ENCODE measurements at regions of chr11 and their contacts with region 1.

Region 1: DNA sequence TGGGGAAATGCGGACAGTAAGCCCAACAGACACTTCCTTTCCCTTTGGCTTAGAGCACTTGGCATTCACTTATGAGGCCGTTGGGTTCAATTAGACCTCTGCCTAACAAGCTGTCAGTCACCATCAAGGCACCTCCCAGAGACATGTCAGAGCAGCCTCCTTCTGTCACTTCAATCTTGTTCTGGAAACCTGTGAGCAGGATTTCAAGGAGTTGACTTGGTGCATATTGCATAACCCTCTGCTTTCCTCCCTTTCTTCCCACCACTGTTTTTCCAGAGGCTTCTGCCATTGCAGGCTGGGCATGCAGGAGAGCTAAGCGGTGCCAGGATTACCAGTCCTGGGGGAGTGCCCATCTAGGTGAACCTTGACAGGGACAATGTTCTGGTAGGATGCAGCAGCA is 484.2 kb upstream of the LRRC4C start:
- DNase-seq: no peak
- ATAC-seq: no peak
- H3K4me3 ChIP-seq: no peak overlapping the region
- H3K4me3 Mint-ChIP-seq: no peak overlapping the region
- H3K27ac ChIP-seq: no peak overlapping the region
- H3K27ac Mint-ChIP-seq: no peak overlapping the region
- H3K4me1 ChIP-seq: no peaks in the 10 kb centered on the region
- H3K4me1 Mint-ChIP-seq: no peaks in the 10 kb centered on the region
- H3K27me3 ChIP-seq: no peaks in the 10 kb centered on the region
- H3K27me3 Mint-ChIP-seq: no peaks in the 10 kb centered on the region
- CTCF ChIP-seq: no peak

Region 2: DNA sequence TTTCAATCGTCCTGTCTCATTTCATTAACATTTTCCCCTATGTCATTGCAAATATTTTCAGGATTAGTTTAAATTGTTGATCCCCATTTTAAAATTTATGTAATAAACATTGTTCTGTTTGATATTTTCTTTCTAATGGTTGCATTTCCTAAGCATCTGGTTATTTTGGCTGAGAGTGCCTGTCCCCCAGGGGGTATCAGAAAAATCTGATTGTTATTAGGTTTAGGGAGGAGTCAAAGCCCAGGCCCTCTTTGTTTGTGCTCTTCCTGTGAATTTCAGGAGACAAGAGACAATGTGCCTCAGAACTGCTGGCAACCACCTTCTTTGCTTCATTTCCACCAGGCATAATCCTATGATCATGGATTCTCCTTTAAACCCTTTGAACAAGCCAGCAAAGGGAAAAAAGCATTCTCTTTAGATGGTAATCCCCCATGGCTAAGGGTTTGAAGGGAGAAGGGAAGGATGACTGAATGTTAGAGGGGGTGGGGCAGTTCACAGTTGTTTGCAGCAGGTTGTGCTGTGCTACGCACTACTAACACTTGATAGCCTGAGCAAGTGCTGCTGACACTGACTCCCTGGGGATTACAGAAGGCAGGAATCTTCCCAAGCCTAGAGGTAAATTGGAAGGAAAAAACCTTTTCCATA is 21.8 kb before region 1 on chr11:
- CTCF ChIA-PET with region 1: no interaction called
- POLR2A ChIA-PET with region 1: no interaction called
- intact Hi-C with region 1: loop called in 1 of 2 experiments (anchors 2 kb)
- DNase-seq: no peak
- ATAC-seq: no peak
- H3K4me3 ChIP-seq: no peak overlapping the region
- H3K4me3 Mint-ChIP-seq: no peak overlapping the region
- H3K27ac ChIP-seq: no peak overlapping the region
- H3K27ac Mint-ChIP-seq: no peak overlapping the region
- H3K4me1 ChIP-seq: no peaks in the 10 kb centered on the region
- H3K4me1 Mint-ChIP-seq: no peaks in the 10 kb centered on the region
- H3K27me3 ChIP-seq: no peaks in the 10 kb centered on the region
- H3K27me3 Mint-ChIP-seq: no peaks in the 10 kb centered on the region
- CTCF ChIP-seq: no peak